ENCODE measurements at regions of chrX and their contacts with region 1.

Region 1: DNA sequence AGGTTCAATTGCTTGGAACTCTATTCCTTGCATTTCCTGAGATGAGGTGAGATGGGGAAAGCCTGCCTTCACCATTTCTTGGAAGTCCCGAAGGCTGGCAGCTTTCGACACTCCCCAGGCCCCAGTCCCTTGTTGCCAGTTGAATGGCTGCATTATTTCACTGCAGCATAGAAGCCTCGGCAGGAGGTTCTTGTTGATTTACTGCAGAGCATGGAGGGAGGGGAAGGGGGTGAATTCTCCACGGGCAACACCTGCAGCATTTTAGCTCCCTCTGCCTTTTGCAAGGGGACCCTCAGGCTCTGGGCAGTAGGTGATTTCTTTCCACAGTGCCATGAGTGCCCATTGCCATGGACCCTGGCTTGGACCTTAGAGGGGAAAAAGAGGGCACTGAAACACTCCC is 10.7 kb upstream of the BCLAF3 start:
- DNase-seq: no peak
- ATAC-seq: no peak
- H3K4me3 ChIP-seq: no peak overlapping the region
- H3K4me3 Mint-ChIP-seq: no peak overlapping the region
- H3K27ac ChIP-seq: no peak overlapping the region
- H3K27ac Mint-ChIP-seq: no peak overlapping the region
- H3K4me1 ChIP-seq: no peaks in the 10 kb centered on the region
- H3K4me1 Mint-ChIP-seq: no peaks in the 10 kb centered on the region
- H3K27me3 ChIP-seq: no peaks in the 10 kb centered on the region
- H3K27me3 Mint-ChIP-seq: peaks cover 0 to 4% of the 10 kb centered on the region in 2 donors

Region 2: DNA sequence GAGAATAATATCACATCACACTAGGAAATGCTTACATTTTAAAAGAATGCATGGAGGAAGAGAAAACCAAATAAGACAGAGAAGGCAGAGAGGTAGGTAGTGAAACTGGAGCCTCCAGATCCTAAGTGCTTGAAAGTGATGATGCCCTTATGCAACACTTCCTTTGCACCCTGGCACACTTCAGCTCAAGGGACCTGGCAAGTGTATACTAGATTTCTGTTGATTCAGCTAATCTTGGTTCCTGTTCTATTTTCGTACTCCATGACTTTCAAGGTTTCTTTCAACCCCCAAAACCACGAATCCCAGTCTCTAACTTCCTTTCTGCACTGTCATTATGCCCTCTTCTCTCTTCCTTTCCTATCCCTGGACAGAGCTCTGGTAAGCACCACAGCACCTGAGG is 77.3 kb before region 1 on chrX:
- CTCF ChIA-PET with region 1: interaction called in 1 of 2 experiments, 14 read pairs
- POLR2A ChIA-PET with region 1: no interaction called
- DNase-seq: no peak
- ATAC-seq: no peak
- H3K4me3 ChIP-seq: no peak overlapping the region
- H3K4me3 Mint-ChIP-seq: no peak overlapping the region
- H3K27ac ChIP-seq: no peak overlapping the region
- H3K27ac Mint-ChIP-seq: peak overlapping the region in 1 of 2 donors; percentile 52
- H3K4me1 ChIP-seq: no peaks in the 10 kb centered on the region
- H3K4me1 Mint-ChIP-seq: no peaks in the 10 kb centered on the region
- H3K27me3 ChIP-seq: no peaks in the 10 kb centered on the region
- H3K27me3 Mint-ChIP-seq: peaks cover 0 to 6% of the 10 kb centered on the region in 2 donors

Region 3: DNA sequence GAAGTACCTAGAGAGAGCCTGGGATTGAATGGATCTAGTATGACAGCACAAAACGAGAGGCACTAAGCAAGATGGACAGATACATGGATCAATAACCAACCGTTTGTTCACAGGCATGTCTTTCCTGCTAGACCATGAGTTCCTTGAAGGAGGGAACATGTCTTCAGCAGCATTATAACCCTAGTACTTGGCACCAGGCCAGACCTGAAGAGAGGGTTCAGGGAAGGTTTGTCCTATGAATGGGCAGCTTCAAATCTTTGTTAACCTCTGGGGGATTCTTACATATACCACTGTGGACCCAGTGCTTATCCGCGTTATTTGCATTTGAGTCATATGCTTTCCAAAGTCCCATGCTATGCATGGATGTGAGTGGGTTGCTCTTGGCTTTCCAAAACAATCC is 812.5 kb after region 1 on chrX:
- CTCF ChIA-PET with region 1: no interaction called
- POLR2A ChIA-PET with region 1: no interaction called
- DNase-seq: no peak
- ATAC-seq: no peak
- H3K4me3 ChIP-seq: no peak overlapping the region
- H3K4me3 Mint-ChIP-seq: no peak overlapping the region
- H3K27ac ChIP-seq: no peak overlapping the region
- H3K27ac Mint-ChIP-seq: no peak overlapping the region
- H3K4me1 ChIP-seq: no peaks in the 10 kb centered on the region
- H3K4me1 Mint-ChIP-seq: no peaks in the 10 kb centered on the region
- H3K27me3 ChIP-seq: no peaks in the 10 kb centered on the region
- H3K27me3 Mint-ChIP-seq: peaks cover 5 to 14% of the 10 kb centered on the region in 2 donors

Measured in T-cell (primary cell).